Activated naive CD4-positive, alpha-beta T cell treated with anti-CD3 and anti-CD28 coated beads, Interleukin-2, amount 10 ng/mL, durations not matched to agents 7 days and 5 days (primary cell): ENCODE measurements at regions of chr3 and their contacts with region 1.

Region 1: DNA sequence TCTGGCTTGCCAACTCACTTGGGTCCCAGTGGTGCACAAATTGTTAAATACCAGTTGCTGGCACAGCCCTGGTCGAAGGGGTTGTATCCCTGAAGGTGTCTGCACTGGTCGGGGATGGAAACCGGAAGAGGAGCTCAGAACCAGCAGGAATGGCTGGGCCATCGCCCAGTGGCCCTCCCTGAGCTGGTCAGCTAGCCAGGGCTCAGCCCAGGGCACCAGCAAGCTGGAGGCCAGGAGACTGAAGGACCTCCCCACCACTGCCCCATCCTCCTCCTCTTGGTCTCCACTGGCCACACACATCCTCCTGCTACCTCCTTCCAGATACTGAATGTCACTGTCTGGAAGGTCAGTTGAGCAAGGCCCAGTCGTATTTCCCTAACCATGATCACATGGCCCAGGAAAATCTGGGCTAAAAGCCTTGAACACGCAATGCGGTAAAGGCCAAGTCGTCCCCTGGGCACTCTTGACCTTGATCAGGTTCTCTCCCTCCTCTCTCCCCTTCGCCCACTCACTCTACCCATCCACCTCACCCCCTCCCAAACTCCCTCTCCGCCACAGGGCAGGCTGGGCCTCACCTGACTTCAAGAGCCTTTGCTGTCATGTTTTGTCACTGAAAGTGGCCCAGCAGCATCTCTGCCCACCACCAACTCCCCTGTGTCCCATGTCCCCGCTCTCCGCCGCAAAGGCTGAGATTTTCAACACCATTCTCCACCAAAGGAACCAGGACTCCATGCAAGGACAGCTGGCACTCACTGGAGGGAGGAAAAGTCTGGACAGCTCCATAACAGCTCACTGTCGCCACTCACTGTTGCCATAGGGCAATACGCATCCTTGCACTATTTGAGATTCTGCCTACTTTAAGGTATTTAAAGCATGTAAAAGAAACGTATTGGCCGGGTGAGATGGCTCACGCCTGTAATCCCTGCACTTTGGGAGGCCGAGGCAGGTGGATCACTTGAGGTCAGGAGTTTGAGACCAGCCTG is 12.1 kb downstream of the ZDHHC19 start:
- DNase-seq: no peak
- H3K4me3 Mint-ChIP-seq: no peak overlapping the region
- H3K27ac Mint-ChIP-seq: no peak overlapping the region
- H3K4me1 Mint-ChIP-seq: peaks cover 31% of the 10 kb centered on the region
- H3K27me3 Mint-ChIP-seq: peaks cover 27% of the 10 kb centered on the region

Region 2: DNA sequence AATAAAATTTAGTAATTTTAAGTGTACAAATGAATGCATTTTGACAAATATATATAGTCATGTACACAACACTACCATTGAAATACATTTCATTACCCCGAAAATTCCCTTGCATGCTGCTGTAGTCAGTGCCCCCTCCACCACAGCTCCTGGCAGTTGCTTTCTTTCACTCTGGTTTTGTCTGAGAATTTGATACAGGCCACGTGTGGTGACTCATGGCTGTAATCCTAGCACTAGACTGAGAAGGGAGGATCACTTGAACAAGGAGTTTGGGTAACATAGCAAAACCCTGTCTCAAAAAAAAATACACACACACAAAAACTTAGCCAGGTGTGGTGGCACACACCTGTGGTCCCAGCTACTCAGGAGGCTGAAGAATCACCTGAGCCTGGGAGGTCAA is 182.6 kb before region 1 on chr3:
- CTCF ChIA-PET with region 1: interaction called, 11 read pairs
- DNase-seq: no peak
- H3K4me3 Mint-ChIP-seq: no peak overlapping the region
- H3K27ac Mint-ChIP-seq: no peak overlapping the region
- H3K4me1 Mint-ChIP-seq: no peaks in the 10 kb centered on the region
- H3K27me3 Mint-ChIP-seq: peaks cover 44% of the 10 kb centered on the region

Region 3: GRCh38 chr3:196060834-196061233 is 138.2 kb before region 1 on chr3:
- CTCF ChIA-PET with region 1: no interaction called
- DNase-seq: no peak
- H3K4me3 Mint-ChIP-seq: no peak overlapping the region
- H3K27ac Mint-ChIP-seq: no peak overlapping the region
- H3K4me1 Mint-ChIP-seq: no peaks in the 10 kb centered on the region
- H3K27me3 Mint-ChIP-seq: no peaks in the 10 kb centered on the region

Region 4: DNA sequence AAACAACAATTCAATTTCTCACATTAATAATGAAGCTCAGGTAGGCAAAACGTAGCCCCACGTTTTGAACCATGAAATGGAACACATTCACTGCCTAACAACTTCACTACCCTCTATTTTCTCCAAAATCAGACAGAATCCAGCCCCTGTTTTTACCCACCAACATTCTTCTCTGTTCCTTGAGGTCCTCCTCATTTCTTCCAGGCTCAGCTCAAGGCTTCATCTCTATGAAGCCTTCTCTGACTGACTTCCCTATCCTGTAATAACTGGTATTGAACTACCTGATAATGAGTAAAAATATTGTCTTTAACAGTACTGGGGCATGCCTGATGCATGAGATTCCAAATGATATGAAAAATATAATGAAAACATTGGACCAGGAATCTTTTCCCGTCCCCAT is 119.4 kb before region 1 on chr3:
- CTCF ChIA-PET with region 1: interaction called, 293 read pairs
- DNase-seq: no peak
- H3K4me3 Mint-ChIP-seq: peak overlapping the region; percentile 100
- H3K27ac Mint-ChIP-seq: peak overlapping the region; percentile 94
- H3K4me1 Mint-ChIP-seq: peaks cover 49% of the 10 kb centered on the region
- H3K27me3 Mint-ChIP-seq: no peaks in the 10 kb centered on the region

Region 5: GRCh38 chr3:196096382-196096953 is 102.6 kb before region 1 on chr3:
- CTCF ChIA-PET with region 1: interaction called, 12 read pairs
- DNase-seq: peak; percentile 1
- H3K4me3 Mint-ChIP-seq: no peak overlapping the region
- H3K27ac Mint-ChIP-seq: no peak overlapping the region
- H3K4me1 Mint-ChIP-seq: peaks cover 6% of the 10 kb centered on the region
- H3K27me3 Mint-ChIP-seq: peaks cover 4% of the 10 kb centered on the region

Region 6: GRCh38 chr3:196214783-196215441 is 15.8 kb after region 1 on chr3:
- CTCF ChIA-PET with region 1: no interaction called
- DNase-seq: no peak
- H3K4me3 Mint-ChIP-seq: no peak overlapping the region
- H3K27ac Mint-ChIP-seq: no peak overlapping the region
- H3K4me1 Mint-ChIP-seq: peaks cover 25% of the 10 kb centered on the region
- H3K27me3 Mint-ChIP-seq: peaks cover 30% of the 10 kb centered on the region